ENCODE measurements at regions of chr21 and their contacts with region 1.

Region 1: DNA sequence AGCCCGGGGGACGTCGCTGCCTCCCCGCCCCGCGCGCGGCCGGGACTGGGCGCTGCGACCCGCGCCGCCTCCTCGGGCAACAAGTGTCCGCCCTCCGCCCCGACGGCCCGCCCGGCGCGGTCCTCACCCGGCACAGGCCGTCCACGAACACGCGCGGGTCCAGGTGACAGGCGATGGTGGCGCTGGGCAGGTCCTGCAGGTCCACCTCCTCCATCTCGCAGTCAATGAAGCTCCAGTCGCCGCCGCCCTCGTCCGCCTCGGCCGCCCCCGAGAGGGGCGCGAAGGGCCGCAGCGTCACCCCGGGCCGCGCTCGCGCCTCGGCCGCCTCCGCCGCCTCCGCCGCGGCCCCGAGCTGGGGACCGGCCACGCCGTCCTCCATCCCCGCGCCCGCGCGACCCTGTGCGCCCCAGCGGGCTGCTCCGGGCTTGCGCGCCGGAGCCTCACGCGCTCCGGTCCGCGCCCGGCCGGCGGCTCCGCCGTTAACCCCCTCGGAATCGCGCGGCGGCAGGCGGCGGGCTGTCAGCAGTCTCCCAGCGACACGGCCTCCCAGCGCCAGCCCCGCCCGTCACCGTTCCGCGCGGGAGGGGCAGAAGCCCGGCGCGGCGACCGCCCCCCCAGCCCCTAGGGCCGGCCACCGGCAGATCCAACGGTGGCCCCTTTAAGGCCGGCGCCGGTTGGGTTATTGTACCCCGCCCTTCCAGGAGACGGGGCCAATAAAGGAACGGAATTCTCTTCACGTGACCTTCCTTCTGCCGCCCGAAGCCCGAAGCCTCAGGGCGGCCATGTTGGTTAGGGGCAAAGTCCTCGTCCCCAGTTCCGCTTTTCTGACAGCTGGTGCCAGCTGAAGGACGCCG is at the start of gene RCAN1:
- DNase-seq: peak; percentile 92
- ATAC-seq: peak; percentile 98
- total RNA-seq, gene RCAN1: 36.0 TPM

Region 2: DNA sequence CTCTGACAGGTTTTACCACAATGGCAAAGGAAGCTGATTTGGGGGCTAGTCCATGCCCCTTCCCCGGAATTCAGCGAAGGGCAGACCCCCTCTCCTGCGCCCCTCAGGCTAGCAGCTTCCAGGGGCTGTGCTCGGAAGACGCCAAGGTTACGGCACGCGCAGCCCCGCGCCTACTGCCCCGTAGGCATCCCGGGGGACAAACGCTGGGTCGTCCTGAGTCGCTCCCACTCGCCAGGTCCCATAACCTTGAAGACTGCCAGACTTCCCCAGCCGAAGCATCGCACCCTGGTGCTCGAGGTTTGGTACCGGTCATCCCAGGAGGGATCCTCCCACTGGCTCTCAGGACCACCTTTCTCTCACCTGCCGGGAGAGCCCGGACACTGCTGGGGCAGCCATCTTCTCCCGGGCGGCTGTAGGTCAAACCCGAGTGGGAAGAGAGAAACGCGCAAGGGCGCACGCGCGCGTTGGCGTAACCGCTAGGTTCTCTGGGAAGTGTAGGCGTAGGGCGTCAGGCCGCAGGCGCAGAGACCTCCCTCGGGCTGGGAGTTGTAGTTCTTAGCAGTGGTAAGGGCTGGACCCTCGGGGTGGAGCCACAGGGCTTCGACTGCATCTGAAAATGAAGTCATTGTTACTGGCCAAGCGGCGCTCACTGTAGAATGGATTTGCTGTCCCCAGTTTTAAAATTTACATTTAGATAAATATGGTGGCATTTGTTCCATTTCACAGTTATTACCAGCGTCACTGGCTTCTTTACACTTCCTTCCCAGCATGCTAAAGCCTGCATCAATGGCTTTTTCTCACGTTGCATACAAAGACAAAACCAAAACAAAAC is 699.3 kb before region 1 on chr21 and contains the start of gene ATP5PO:
- intact Hi-C with region 1: loop called (anchors 10 kb)
- DNase-seq: peak; percentile 100
- ATAC-seq: peak; percentile 98
- total RNA-seq, gene ATP5PO: 835 TPM

Region 3: DNA sequence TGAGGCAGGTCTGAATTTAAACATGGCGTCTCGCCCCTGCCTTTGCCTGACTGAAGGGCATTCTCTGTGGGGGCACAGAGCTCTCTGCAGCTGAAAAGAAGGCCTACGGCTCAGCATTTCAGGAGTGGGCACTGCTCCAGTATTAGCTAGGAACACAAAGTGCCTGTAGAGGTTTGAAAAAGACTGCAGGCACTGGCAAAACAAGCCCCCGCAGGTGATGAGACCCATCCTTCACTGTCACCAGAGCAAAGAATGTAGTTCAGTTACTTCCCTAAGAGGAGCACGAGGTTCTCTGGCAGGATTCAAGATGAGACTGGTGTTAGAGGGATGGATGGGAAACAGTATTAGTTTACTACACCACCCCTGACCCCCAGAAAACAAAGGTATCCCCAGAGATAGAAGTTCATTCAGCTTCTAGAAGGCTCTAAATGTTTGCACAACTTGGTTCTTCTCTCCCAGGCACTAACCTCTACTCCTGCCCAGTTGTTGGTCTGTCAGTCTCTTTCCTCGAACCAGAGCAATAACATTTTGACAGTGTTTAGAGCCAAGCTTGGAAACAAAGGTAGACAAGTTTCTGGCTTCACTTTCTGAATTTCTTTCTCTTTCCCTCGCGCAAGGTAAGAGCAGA is 352.9 kb before region 1 on chr21:
- intact Hi-C with region 1: no loop called
- DNase-seq: no peak
- ATAC-seq: peak; percentile 15

Region 4: DNA sequence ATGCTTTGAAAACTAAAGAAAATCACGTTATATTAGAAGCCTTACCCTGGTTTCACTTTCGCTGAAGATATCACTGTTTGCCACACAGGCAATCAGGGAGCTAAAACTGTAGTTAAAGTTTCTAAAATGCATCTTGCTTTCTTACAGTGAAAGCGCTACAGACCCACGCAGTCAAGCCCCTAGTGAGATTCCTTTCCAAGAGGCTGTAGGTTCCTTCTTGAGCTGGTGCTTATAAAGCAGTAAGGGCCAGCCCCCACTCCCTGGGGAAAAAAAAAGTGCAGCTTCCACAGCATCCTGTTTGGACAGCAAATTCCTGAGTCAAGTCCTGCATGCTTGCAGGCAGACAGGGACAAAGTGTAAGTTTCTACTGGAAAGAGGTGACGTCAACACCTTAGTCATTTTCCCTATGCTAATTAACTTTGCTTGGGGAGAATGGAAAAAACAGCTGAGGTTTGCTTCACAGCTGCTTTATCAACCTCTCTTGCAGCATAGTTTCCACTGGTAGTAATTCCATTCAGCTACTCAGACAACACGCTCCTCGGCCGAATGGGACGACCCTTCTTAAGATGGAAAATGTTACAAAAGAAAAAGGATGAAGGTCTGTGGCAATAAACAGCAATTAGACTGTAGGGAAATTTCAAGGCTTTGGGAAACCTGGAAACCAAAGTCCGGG is 88.1 kb before region 1 on chr21:
- intact Hi-C with region 1: loop called (anchors 5 kb)
- DNase-seq: peak; percentile 73
- ATAC-seq: peak; percentile 88

Region 5: GRCh38 chr21:34745557-34746255 is 130.8 kb after region 1 on chr21:
- intact Hi-C with region 1: no loop called
- DNase-seq: peak; percentile 80
- ATAC-seq: peak; percentile 95

Region 6: GRCh38 chr21:34916446-34916845 is 301.6 kb after region 1 on chr21:
- intact Hi-C with region 1: no loop called
- DNase-seq: no peak
- ATAC-seq: no peak